ENCODE measurements at regions of chr20 and their contacts with region 1.

Region 1: DNA sequence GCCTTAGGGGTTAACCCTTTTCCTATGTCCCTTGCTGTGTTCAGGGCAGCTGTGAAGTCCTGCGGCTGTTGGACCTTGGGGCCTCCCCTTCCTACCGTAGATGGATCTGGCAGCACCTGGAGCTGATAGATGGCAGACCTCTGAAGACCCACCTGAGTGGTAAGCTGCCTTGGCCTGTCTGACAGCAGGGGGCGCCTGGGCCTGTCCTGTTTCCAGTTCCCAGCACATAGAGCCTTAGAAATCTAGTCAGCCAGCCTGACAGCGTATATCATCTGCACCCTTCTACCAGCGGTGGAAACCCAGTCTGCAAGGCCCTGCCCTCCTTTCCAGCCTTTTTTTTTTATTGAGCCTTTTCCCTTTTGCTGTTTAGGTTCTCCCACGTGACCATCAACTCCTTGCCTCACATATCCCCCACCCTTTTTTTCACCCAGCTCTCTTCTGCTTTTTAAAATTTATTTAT is 26.6 kb downstream of the CNBD2 start:
- H3K4me3 Mint-ChIP-seq: no peak overlapping the region
- H3K27ac Mint-ChIP-seq: no peak overlapping the region
- H3K4me1 Mint-ChIP-seq: peaks cover 6% of the 10 kb centered on the region
- H3K27me3 Mint-ChIP-seq: peaks cover 7% of the 10 kb centered on the region

Region 2: GRCh38 chr20:35963878-35964277 is 31.1 kb before region 1 on chr20:
- intact Hi-C with region 1: no loop called
- H3K4me3 Mint-ChIP-seq: no peak overlapping the region
- H3K27ac Mint-ChIP-seq: no peak overlapping the region
- H3K4me1 Mint-ChIP-seq: no peaks in the 10 kb centered on the region
- H3K27me3 Mint-ChIP-seq: peaks cover 12% of the 10 kb centered on the region

Region 3: GRCh38 chr20:36030149-36030548 is 35.1 kb after region 1 on chr20:
- intact Hi-C with region 1: no loop called
- H3K4me3 Mint-ChIP-seq: no peak overlapping the region
- H3K27ac Mint-ChIP-seq: no peak overlapping the region
- H3K4me1 Mint-ChIP-seq: no peaks in the 10 kb centered on the region
- H3K27me3 Mint-ChIP-seq: peaks cover 5% of the 10 kb centered on the region

Region 4: GRCh38 chr20:36043892-36044515 is 49.0 kb after region 1 on chr20:
- intact Hi-C with region 1: loop called (anchors 10 kb)
- H3K4me3 Mint-ChIP-seq: no peak overlapping the region
- H3K27ac Mint-ChIP-seq: no peak overlapping the region
- H3K4me1 Mint-ChIP-seq: peaks cover 60% of the 10 kb centered on the region
- H3K27me3 Mint-ChIP-seq: no peaks in the 10 kb centered on the region

Region 5: GRCh38 chr20:36132802-36133211 is 137.8 kb after region 1 on chr20:
- intact Hi-C with region 1: loop called (anchors 1 kb)
- H3K4me3 Mint-ChIP-seq: no peak overlapping the region
- H3K27ac Mint-ChIP-seq: no peak overlapping the region
- H3K4me1 Mint-ChIP-seq: peaks cover 6% of the 10 kb centered on the region
- H3K27me3 Mint-ChIP-seq: peaks cover 2% of the 10 kb centered on the region

Measured in dendritic cell treated with granulocyte-macrophage colony-stimulating factor and Interleukin-4, amounts not matched to agents 40 ng/mL and 50 ng/mL, for 4 days (primary cell).